CD14-positive monocyte (primary cell): ENCODE measurements at regions of chr2 and their contacts with region 1.

Region 1: GRCh38 chr2:85707304-85707703 is 13.1 kb downstream of the GNLY start:
- DNase-seq: peak; percentile 88 to 96 (median 88)
- H3K4me3 ChIP-seq: peak overlapping the region in 1 of 3 experiments; percentile 35
- H3K4me3 Mint-ChIP-seq: peak overlapping the region in 1 of 2 donors; percentile 52
- H3K27ac ChIP-seq: peak overlapping the region; percentile 97 to 99
- H3K27ac Mint-ChIP-seq: peak overlapping the region; percentile 97 to 100 (median 99)
- H3K4me1 ChIP-seq: peaks cover 100% of the 10 kb centered on the region in 2 donors
- H3K4me1 Mint-ChIP-seq: peaks cover 90% of the 10 kb centered on the region
- H3K27me3 ChIP-seq: no peaks in the 10 kb centered on the region
- H3K27me3 Mint-ChIP-seq: no peaks in the 10 kb centered on the region
- CTCF ChIP-seq: peak; percentile 80

Region 2: DNA sequence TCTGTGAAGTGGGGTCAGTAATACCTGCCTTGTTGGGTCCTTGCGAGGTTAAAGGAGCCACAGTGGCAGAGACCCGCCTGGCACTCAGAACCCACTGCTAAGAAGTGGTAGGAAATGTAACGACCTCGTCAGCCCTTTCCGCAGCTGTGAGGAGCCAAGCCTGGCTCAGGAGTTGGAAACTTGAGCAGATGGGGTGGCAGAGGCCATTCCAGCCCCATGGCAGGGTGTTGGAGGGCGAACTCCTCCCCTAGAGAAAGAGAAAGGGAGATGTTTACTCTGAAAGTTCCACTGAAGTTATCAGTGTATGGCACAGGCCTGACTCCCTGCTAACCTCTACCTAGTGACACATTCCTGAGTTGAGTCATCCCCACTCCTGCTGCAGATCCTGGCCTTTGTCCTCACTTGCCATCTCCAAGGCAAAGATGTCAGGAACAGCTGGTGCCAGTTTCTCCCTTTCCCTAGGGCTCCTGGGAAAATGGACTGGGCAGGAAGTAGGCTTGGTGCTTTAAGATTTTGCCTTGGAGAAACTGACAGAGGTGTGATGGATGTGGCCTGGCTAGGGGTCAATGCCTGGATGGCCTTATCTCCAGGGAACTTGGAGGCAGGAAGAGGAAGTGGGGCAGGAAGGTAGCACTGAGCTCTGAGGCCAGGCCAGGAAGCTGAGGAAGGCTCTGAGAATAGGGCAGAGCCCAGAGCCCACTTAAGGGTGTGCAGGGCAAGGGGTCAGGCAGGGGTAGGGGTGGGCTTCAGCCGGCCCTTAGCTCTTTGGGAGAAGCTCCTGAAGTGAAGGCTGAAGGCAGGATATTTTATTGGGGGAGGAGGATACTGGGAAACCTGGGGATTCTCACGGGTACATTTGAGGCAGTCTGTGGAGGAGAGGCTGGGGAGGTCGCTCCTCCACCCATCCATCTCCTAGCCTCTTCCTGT is 122.2 kb before region 1 on chr2:
- intact Hi-C with region 1: loop called in 1 of 2 experiments (anchors 5 kb)
- DNase-seq: peak in 2 of 3 donors; percentile 40 to 48
- H3K4me3 ChIP-seq: peak overlapping the region; percentile 50 to 83 (median 66)
- H3K4me3 Mint-ChIP-seq: peak overlapping the region; percentile 83 to 88
- H3K27ac ChIP-seq: peak overlapping the region; percentile 33 to 86
- H3K27ac Mint-ChIP-seq: peak overlapping the region; percentile 71 to 92 (median 88)
- H3K4me1 ChIP-seq: peaks cover 84 to 89% of the 10 kb centered on the region in 2 donors
- H3K4me1 Mint-ChIP-seq: peaks cover 85% of the 10 kb centered on the region
- H3K27me3 ChIP-seq: no peaks in the 10 kb centered on the region
- H3K27me3 Mint-ChIP-seq: peaks cover 0 to 2% (median 0%) of the 10 kb centered on the region in 3 donors
- CTCF ChIP-seq: no peak

Region 3: GRCh38 chr2:85674456-85674816 is 32.9 kb before region 1 on chr2:
- intact Hi-C with region 1: loop called (anchors 5 kb)
- DNase-seq: peak; percentile 78 to 88 (median 86)
- H3K4me3 ChIP-seq: no peak overlapping the region
- H3K4me3 Mint-ChIP-seq: no peak overlapping the region
- H3K27ac ChIP-seq: peak overlapping the region; percentile 78 to 79
- H3K27ac Mint-ChIP-seq: peak overlapping the region; percentile 81 to 93 (median 87)
- H3K4me1 ChIP-seq: peaks cover 79 to 86% of the 10 kb centered on the region in 2 donors
- H3K4me1 Mint-ChIP-seq: peaks cover 82% of the 10 kb centered on the region
- H3K27me3 ChIP-seq: no peaks in the 10 kb centered on the region
- H3K27me3 Mint-ChIP-seq: peaks cover 0 to 3% (median 0%) of the 10 kb centered on the region in 3 donors
- CTCF ChIP-seq: no peak